ENCODE measurements at regions of chr15 and their contacts with region 1.

Region 1: GRCh38 chr15:77496710-77497103 is 76.0 kb downstream of the HMG20A start:
- DNase-seq: peak; percentile 72 to 80 (median 76)
- H3K4me3 ChIP-seq: no peak overlapping the region
- H3K27ac ChIP-seq: no peak overlapping the region
- H3K4me1 ChIP-seq: peaks cover 0 to 27% (median 25%) of the 10 kb centered on the region in 4 experiments
- H3K27me3 ChIP-seq: peaks cover 0 to 5% (median 0%) of the 10 kb centered on the region in 5 experiments

Region 2: DNA sequence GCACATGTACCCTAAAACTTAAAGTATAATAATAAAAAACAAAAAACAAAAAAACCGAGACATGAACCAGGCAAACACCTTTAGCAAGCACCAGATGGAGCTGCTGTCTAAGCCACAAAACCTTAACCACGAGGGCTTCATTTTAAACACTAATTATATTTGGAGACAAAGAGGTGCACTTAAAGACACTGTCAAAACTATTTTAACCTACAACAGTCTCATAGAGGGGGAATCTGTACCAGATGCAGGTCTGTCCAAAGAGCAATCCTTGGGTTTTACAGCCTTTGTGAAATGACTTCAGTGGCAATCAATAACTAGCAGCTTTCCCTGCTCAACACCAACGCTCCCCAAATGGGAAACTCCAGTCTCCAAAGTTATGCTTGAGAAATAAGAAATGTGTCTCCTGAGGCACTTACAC is 310.1 kb before region 1 on chr15:
- CTCF ChIA-PET with region 1: interaction called, 80 read pairs
- POLR2A ChIA-PET with region 1: no interaction called
- DNase-seq: peak; percentile 70 to 86 (median 83)
- H3K4me3 ChIP-seq: no peak overlapping the region
- H3K27ac ChIP-seq: peak overlapping the region in 1 of 2 experiments; percentile 77
- H3K4me1 ChIP-seq: peaks cover 25 to 59% (median 42%) of the 10 kb centered on the region in 4 experiments
- H3K27me3 ChIP-seq: no peaks in the 10 kb centered on the region

Region 3: GRCh38 chr15:77507911-77508310 is 11.2 kb after region 1 on chr15:
- CTCF ChIA-PET with region 1: interaction called, 19 read pairs
- POLR2A ChIA-PET with region 1: no interaction called
- DNase-seq: peak in 2 of 3 donors; percentile 19 to 29
- H3K4me3 ChIP-seq: peak overlapping the region in 2 of 7 experiments; percentile 14 to 29
- H3K27ac ChIP-seq: no peak overlapping the region
- H3K4me1 ChIP-seq: peaks cover 0 to 25% (median 22%) of the 10 kb centered on the region in 4 experiments
- H3K27me3 ChIP-seq: peaks cover 0 to 89% (median 24%) of the 10 kb centered on the region in 5 experiments

Region 4: GRCh38 chr15:77557144-77557543 is 60.4 kb after region 1 on chr15:
- CTCF ChIA-PET with region 1: no interaction called
- POLR2A ChIA-PET with region 1: no interaction called
- DNase-seq: no peak
- H3K4me3 ChIP-seq: no peak overlapping the region
- H3K27ac ChIP-seq: no peak overlapping the region
- H3K4me1 ChIP-seq: no peaks in the 10 kb centered on the region
- H3K27me3 ChIP-seq: no peaks in the 10 kb centered on the region